CD8-positive, alpha-beta T cell (primary cell): ENCODE measurements at regions of chr2 and their contacts with region 1.

Region 1: DNA sequence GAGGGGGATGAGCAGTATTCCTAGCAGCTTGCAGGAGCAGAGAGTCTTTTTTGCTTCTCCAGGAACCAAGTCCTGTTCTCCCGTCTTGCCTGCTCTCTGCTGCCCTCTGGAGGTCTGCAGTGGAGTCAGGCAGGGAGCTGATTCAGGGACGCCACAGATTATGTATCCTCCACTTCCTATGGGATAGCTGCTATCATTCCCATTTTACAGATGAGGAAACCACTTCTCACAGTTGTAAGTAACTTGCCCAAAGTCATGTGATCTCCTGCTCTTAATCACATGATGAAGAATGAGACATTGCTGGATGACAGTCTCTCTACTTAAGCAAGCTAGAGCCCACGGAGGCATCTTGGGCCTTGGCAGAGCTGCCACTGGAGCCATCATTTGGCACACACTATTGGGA is 8.3 kb downstream of the SLC4A5 start:
- DNase-seq: peak; percentile 52 to 84 (median 77)
- ATAC-seq: peak; percentile 85
- H3K4me3 ChIP-seq: no peak overlapping the region
- H3K4me3 Mint-ChIP-seq: no peak overlapping the region
- H3K27ac ChIP-seq: no peak overlapping the region
- H3K27ac Mint-ChIP-seq: no peak overlapping the region
- H3K4me1 ChIP-seq: no peaks in the 10 kb centered on the region
- H3K4me1 Mint-ChIP-seq: peaks cover 3% of the 10 kb centered on the region
- H3K27me3 ChIP-seq: no peaks in the 10 kb centered on the region
- H3K27me3 Mint-ChIP-seq: no peaks in the 10 kb centered on the region
- CTCF ChIP-seq: peak; percentile 94

Region 2: GRCh38 chr2:74221091-74221490 is 113.8 kb before region 1 on chr2:
- CTCF ChIA-PET with region 1: no interaction called
- POLR2A ChIA-PET with region 1: no interaction called
- intact Hi-C with region 1: no loop called
- DNase-seq: no peak
- ATAC-seq: no peak
- H3K4me3 ChIP-seq: no peak overlapping the region
- H3K4me3 Mint-ChIP-seq: no peak overlapping the region
- H3K27ac ChIP-seq: no peak overlapping the region
- H3K27ac Mint-ChIP-seq: no peak overlapping the region
- H3K4me1 ChIP-seq: no peaks in the 10 kb centered on the region
- H3K4me1 Mint-ChIP-seq: no peaks in the 10 kb centered on the region
- H3K27me3 ChIP-seq: no peaks in the 10 kb centered on the region
- H3K27me3 Mint-ChIP-seq: no peaks in the 10 kb centered on the region
- CTCF ChIP-seq: no peak

Region 3: DNA sequence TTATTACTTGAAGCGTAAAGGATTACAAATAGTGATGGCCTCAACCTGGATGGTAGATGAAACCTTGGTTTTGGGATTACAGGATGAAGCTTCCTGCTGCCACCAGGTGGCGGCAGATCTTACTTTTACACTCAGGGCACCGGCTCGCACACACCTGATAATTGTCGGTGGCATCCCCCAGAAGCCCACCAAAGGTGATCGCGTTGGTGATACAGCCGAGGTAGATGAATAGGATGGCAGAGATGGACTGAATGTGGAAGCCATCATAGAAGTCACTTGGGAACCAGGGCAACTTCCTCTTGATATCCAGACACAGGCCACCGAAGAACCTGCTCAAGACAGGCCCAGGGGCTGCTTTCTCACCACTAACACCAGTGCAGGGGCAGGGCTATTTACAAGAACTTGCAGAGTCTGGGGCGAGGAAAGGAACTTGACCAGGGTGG is 84.7 kb before region 1 on chr2:
- CTCF ChIA-PET with region 1: interaction called, 257 read pairs
- POLR2A ChIA-PET with region 1: interaction called, 5 read pairs
- intact Hi-C with region 1: loop called (anchors 1 kb)
- DNase-seq: peak; percentile 7 to 79 (median 54)
- ATAC-seq: peak; percentile 75
- H3K4me3 ChIP-seq: no peak overlapping the region
- H3K4me3 Mint-ChIP-seq: no peak overlapping the region
- H3K27ac ChIP-seq: no peak overlapping the region
- H3K27ac Mint-ChIP-seq: no peak overlapping the region
- H3K4me1 ChIP-seq: peaks cover 3% of the 10 kb centered on the region
- H3K4me1 Mint-ChIP-seq: peaks cover 2% of the 10 kb centered on the region
- H3K27me3 ChIP-seq: no peaks in the 10 kb centered on the region
- H3K27me3 Mint-ChIP-seq: no peaks in the 10 kb centered on the region
- CTCF ChIP-seq: peak; percentile 83

Region 4: DNA sequence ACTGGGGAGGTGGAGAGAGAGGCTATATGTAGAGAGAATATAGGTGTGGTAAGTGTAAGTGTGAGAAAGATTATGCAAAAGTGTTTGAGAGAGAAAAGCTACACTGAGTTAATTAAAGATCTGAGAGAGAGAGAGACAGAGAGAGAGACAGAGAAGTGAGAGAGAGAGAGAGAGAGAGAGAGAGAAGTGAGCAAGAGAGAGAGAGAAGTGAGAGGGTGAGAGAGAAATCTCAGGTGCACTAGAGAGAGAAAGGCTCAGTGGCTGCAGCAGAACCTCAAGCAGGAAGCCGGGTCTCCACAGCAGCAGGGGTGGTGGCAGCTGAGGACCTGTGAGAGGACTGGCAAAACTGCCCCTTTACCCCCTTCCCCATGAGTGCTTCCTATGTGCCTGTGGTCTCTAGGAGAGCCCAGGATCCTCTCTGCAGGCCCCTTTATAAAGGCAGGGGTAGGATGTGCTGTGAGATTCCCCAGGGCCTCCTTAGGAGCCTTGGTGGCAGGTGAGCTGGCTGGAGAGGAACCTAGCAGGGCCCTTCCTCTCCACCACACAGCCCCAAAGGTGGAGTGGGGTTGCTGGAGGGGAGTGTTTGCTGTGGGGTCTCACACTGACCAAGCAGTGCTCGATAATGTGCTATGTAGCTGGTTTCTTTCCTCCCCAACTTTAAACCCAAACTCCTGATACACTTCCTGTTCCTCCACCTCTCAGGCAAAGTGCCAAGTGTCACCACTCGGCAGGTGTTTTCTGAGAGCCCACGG is 44.3 kb before region 1 on chr2:
- CTCF ChIA-PET with region 1: interaction called, 18 read pairs
- POLR2A ChIA-PET with region 1: interaction called, 6 read pairs
- intact Hi-C with region 1: no loop called
- DNase-seq: peak; percentile 12 to 82 (median 42)
- ATAC-seq: peak; percentile 78
- H3K4me3 ChIP-seq: peak overlapping the region; percentile 6 to 22
- H3K4me3 Mint-ChIP-seq: peak overlapping the region; percentile 73
- H3K27ac ChIP-seq: peak overlapping the region; percentile 43 to 81
- H3K27ac Mint-ChIP-seq: peak overlapping the region; percentile 95
- H3K4me1 ChIP-seq: peaks cover 22% of the 10 kb centered on the region
- H3K4me1 Mint-ChIP-seq: peaks cover 22% of the 10 kb centered on the region
- H3K27me3 ChIP-seq: no peaks in the 10 kb centered on the region
- H3K27me3 Mint-ChIP-seq: no peaks in the 10 kb centered on the region
- CTCF ChIP-seq: no peak

Region 5: DNA sequence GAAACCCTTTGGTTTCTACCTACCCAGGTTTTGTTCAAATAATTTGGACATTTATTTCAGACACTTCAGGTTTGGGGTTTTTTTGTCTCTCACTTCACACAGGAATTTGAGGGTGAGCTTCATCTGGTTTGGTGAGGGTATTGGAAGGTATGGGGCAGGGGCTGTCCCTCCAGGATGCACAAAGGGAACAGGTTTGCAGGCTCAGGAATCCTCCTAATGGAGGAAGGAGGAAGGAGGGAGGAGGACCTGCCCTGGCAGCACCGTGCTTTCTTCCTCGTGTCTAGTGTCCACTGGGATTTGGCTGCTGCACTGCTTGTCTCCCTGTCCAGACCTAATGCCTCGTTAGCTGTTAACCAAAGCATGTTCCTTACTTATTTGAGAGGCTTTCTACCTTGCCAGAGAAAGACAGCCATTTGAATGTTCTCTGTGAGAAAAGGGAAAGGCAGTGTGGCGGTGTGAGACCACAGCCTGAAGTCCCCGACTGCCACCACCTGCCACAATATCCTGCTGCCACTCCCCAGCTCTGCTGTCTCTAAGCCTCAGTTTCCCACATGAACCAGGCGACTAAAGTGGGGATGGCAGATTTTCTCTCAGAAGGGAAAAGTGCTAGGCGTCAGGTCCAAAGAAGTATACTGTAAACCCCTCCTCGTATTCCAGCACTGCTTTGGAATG is 10.5 kb after region 1 on chr2:
- CTCF ChIA-PET with region 1: interaction called, 32 read pairs
- POLR2A ChIA-PET with region 1: no interaction called
- intact Hi-C with region 1: no loop called
- DNase-seq: no peak
- ATAC-seq: no peak
- H3K4me3 ChIP-seq: no peak overlapping the region
- H3K4me3 Mint-ChIP-seq: no peak overlapping the region
- H3K27ac ChIP-seq: no peak overlapping the region
- H3K27ac Mint-ChIP-seq: no peak overlapping the region
- H3K4me1 ChIP-seq: no peaks in the 10 kb centered on the region
- H3K4me1 Mint-ChIP-seq: no peaks in the 10 kb centered on the region
- H3K27me3 ChIP-seq: no peaks in the 10 kb centered on the region
- H3K27me3 Mint-ChIP-seq: no peaks in the 10 kb centered on the region
- CTCF ChIP-seq: no peak

Region 6: DNA sequence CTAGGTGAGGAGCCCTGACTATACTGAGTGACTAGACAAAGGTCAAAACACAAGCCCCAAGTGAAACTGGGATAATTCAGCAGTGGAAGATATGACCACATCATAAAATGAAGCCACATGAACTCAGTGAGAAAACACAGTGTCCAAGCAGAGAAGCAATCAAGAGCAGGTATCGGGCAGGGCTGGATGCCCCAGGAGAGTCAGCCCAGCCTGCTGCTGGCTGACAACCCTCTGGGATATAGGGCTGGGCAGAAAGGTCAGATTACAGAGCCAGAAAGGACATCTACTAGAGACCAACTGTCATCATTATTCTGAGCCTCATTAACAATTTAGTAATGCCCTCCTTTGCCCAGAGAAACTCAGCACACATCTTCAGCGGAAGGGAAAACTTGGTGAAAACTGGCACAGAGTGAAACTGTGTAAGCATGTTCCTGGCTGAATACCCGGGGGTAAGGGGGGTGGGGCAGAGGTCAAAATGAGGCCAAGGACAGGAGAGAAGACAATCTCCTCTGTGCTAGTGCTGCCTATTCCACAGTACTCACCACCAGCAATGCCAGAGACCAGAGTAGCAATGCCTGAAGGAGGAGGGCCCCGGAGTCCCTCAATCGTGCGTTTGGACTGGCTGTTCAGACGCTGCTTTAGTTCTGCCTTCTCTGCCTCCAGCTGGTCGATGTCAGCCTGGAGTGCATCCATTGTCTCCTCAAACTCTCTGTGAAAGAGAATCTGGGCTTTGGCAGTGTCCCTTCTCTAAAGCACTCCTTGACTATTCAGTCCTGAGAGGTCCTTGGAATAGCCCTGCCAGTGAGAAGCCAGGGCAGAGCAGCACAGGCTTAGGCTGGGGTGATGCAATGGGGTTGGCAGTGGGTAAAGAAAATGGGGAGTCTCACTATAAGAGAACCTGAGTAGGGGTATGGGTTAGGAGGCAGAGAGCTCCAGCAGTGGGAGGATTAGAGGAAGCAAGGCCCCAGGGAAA is 29.9 kb after region 1 on chr2:
- CTCF ChIA-PET with region 1: interaction called, 30 read pairs
- POLR2A ChIA-PET with region 1: no interaction called
- intact Hi-C with region 1: no loop called
- DNase-seq: no peak
- ATAC-seq: no peak
- H3K4me3 ChIP-seq: no peak overlapping the region
- H3K4me3 Mint-ChIP-seq: no peak overlapping the region
- H3K27ac ChIP-seq: no peak overlapping the region
- H3K27ac Mint-ChIP-seq: no peak overlapping the region
- H3K4me1 ChIP-seq: no peaks in the 10 kb centered on the region
- H3K4me1 Mint-ChIP-seq: no peaks in the 10 kb centered on the region
- H3K27me3 ChIP-seq: no peaks in the 10 kb centered on the region
- H3K27me3 Mint-ChIP-seq: no peaks in the 10 kb centered on the region
- CTCF ChIP-seq: no peak